Naive thymus-derived CD4-positive, alpha-beta T cell (primary cell): ENCODE measurements at regions of chr2 and their contacts with region 1.

Region 1: GRCh38 chr2:46050489-46050888 is 246.7 kb upstream of the EPAS1 start:
- DNase-seq: no peak
- ATAC-seq: no peak
- H3K4me3 ChIP-seq: no peak overlapping the region
- H3K4me3 Mint-ChIP-seq: no peak overlapping the region
- H3K27ac ChIP-seq: no peak overlapping the region
- H3K27ac Mint-ChIP-seq: no peak overlapping the region
- H3K4me1 ChIP-seq: no peaks in the 10 kb centered on the region
- H3K4me1 Mint-ChIP-seq: peaks cover 0 to 20% (median 0%) of the 10 kb centered on the region in 7 donors
- H3K27me3 ChIP-seq: no peaks in the 10 kb centered on the region
- H3K27me3 Mint-ChIP-seq: no peaks in the 10 kb centered on the region

Region 2: DNA sequence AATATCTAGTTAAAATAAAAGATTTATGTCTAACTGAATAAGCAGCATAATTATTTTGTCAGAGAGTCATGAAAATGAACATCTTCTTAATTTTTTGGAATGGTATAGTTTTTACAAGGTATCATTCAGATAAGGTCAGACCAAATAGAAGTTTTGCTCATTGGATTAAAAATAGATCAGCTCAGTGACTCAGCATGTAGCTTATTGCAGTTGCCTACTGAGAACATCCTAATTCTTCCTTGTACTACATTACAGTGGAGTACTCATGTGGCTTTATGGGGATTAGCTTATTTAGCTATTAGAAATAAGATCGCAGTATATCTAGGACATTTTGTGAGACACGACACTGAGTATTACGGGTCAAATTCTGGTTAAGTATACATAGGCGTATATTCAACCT is 1920.0 kb before region 1 on chr2:
- CTCF ChIA-PET with region 1: no interaction called
- POLR2A ChIA-PET with region 1: no interaction called
- intact Hi-C with region 1: no loop called
- DNase-seq: no peak
- ATAC-seq: no peak
- H3K4me3 ChIP-seq: no peak overlapping the region
- H3K4me3 Mint-ChIP-seq: no peak overlapping the region
- H3K27ac ChIP-seq: no peak overlapping the region
- H3K27ac Mint-ChIP-seq: no peak overlapping the region
- H3K4me1 ChIP-seq: no peaks in the 10 kb centered on the region
- H3K4me1 Mint-ChIP-seq: peaks cover 0 to 9% (median 0%) of the 10 kb centered on the region in 7 donors
- H3K27me3 ChIP-seq: no peaks in the 10 kb centered on the region
- H3K27me3 Mint-ChIP-seq: peaks cover 0 to 13% (median 0%) of the 10 kb centered on the region in 5 donors

Region 3: DNA sequence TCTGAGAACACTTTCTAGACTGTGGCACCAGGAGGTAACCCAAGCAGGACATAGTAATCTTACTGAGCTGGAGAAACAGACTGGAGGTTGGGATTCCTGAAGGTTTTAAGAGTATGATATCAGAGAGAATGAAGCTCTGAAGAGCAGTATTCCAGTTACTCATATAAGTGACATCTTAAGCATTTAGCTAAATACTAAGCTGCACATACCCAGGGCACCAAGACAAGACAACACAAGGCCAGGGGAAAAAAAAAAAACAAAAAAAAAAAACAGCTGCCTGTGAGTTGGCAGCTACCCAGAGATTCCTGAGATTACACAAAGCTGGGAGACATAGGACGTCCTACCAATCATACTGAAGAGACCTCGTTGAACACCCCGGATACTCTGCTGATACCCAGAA is 615.2 kb before region 1 on chr2:
- CTCF ChIA-PET with region 1: no interaction called
- POLR2A ChIA-PET with region 1: no interaction called
- intact Hi-C with region 1: no loop called
- DNase-seq: no peak
- ATAC-seq: no peak
- H3K4me3 ChIP-seq: no peak overlapping the region
- H3K4me3 Mint-ChIP-seq: no peak overlapping the region
- H3K27ac ChIP-seq: no peak overlapping the region
- H3K27ac Mint-ChIP-seq: no peak overlapping the region
- H3K4me1 ChIP-seq: no peaks in the 10 kb centered on the region
- H3K4me1 Mint-ChIP-seq: peaks cover 0 to 15% (median 4%) of the 10 kb centered on the region in 7 donors
- H3K27me3 ChIP-seq: no peaks in the 10 kb centered on the region
- H3K27me3 Mint-ChIP-seq: no peaks in the 10 kb centered on the region

Region 4: GRCh38 chr2:46062637-46063412 is 12.3 kb after region 1 on chr2:
- CTCF ChIA-PET with region 1: interaction called, 14 read pairs
- POLR2A ChIA-PET with region 1: no interaction called
- intact Hi-C with region 1: no loop called
- DNase-seq: peak; percentile 14 to 63 (median 50)
- ATAC-seq: peak; percentile 73
- H3K4me3 ChIP-seq: no peak overlapping the region
- H3K4me3 Mint-ChIP-seq: no peak overlapping the region
- H3K27ac ChIP-seq: no peak overlapping the region
- H3K27ac Mint-ChIP-seq: no peak overlapping the region
- H3K4me1 ChIP-seq: peaks cover 0 to 4% of the 10 kb centered on the region in 2 donors
- H3K4me1 Mint-ChIP-seq: peaks cover 0 to 18% (median 0%) of the 10 kb centered on the region in 7 donors
- H3K27me3 ChIP-seq: no peaks in the 10 kb centered on the region
- H3K27me3 Mint-ChIP-seq: peaks cover 0 to 2% (median 0%) of the 10 kb centered on the region in 5 donors